ENCODE measurements at regions of chr2 and their contacts with region 1.

Region 1: GRCh38 chr2:96145036-96145847 is at the start of gene DUSP2:
- DNase-seq: peak; percentile 80 to 97 (median 91)
- ATAC-seq: peak; percentile 37
- H3K4me3 ChIP-seq: peak within 1 kb of the TSS; percentile 91 to 96
- H3K4me3 Mint-ChIP-seq: peak within 1 kb of the TSS; percentile 94
- H3K27ac ChIP-seq: peak within 1 kb of the TSS; percentile 98 to 99
- H3K27ac Mint-ChIP-seq: peak within 1 kb of the TSS; percentile 94
- H3K4me1 ChIP-seq: peaks cover 61% of the 10 kb centered on the region
- H3K4me1 Mint-ChIP-seq: peaks cover 57% of the 10 kb centered on the region
- H3K27me3 ChIP-seq: no peaks in the 10 kb centered on the region
- H3K27me3 Mint-ChIP-seq: no peaks in the 10 kb centered on the region
- CTCF ChIP-seq: no peak
- total RNA-seq, gene DUSP2: 1,304 to 1,350 TPM

Region 2: DNA sequence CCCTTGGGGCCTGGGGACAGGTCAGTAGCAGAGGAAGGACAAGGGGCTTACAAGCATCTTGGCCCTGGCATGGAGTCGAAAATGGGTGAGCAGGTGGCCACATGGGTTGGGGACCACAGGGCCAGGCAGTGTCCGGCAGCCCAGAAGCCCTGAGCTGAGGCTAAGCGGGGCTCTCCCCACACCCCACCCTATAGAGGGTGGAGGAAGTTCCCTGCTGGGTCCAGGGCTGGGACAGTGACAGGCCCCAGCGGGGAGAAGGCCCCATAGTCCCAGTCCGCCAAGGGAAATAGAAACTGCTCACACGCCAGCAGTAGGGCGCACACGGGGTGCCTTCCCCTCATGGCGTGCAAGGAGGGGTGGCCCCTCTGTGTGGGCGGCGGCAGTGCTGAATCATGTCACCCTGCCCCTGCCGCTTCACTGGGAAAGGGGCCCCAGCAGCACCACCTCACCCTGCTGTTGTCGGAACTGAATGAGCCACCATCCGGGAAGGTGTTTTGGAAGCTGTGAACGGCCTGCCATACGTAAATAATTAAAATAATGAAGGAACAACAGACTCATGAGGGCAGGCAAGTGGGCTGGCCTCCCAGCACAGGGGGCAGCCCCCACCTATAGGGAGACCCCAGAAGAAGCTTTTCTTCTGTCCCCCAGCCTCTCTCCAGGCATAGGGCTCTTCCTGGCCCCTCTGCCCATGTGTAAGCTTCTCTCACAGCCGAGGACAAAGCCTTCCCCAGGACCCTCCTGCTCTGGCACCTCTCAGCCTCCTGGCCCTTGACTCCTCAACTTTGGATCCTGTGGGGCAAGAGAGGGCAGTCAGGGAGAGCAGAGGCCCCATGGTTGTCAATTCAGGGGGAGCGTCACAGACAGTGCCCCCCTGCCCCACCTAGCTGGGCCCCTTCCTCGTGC is 12.7 kb after region 1 on chr2:
- CTCF ChIA-PET with region 1: interaction called, 18 read pairs
- POLR2A ChIA-PET with region 1: interaction called, 83 read pairs
- intact Hi-C with region 1: loop called (anchors 1 kb)
- DNase-seq: peak in 8 of 9 experiments; percentile 65 to 92 (median 84)
- ATAC-seq: peak; percentile 81
- H3K4me3 ChIP-seq: peak overlapping the region; percentile 12 to 32
- H3K4me3 Mint-ChIP-seq: peak overlapping the region; percentile 73
- H3K27ac ChIP-seq: peak overlapping the region; percentile 40 to 88
- H3K27ac Mint-ChIP-seq: peak overlapping the region; percentile 92
- H3K4me1 ChIP-seq: peaks cover 69% of the 10 kb centered on the region
- H3K4me1 Mint-ChIP-seq: peaks cover 83% of the 10 kb centered on the region
- H3K27me3 ChIP-seq: no peaks in the 10 kb centered on the region
- H3K27me3 Mint-ChIP-seq: no peaks in the 10 kb centered on the region
- CTCF ChIP-seq: no peak

Region 3: DNA sequence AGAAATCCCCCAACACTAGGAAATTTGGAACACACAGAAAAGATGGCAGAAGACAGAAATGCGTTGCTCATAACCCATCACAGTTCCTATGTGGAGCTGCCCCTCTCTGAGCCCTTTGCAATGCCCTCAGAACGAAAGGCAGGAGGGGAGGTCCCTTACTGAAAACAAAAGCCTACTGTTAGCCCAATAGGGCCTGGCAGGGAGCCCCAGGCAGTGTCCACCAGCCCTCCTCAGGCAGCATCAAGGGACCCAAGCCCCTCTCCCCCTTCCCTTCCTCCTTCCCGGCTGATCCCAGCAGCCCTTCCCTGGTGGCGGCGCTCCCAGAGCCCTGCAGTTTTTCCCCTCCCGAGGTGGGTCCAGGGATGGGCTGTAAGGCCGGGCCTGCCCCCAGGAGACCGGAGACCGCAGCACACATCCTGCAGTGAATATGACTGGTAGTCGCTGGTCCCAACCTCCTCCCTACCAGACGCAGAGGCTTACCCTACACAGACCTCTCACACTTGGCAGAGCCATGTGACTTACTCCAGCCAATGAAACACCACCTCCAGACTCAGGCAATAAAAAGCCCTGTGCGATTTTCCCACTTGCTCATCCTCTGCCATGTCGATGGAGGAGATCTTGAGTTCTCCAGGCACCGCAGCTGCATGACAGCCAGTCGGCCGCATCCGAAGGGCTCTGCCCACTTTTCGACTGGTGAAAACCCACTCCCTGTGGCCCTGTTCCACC is 19.4 kb after region 1 on chr2:
- CTCF ChIA-PET with region 1: interaction called, 775 read pairs
- POLR2A ChIA-PET with region 1: interaction called, 83 read pairs
- intact Hi-C with region 1: loop called (anchors 1 kb)
- DNase-seq: peak in 6 of 9 experiments; percentile 52 to 91 (median 80)
- ATAC-seq: peak; percentile 72
- H3K4me3 ChIP-seq: peak overlapping the region; percentile 25 to 37
- H3K4me3 Mint-ChIP-seq: peak overlapping the region; percentile 78
- H3K27ac ChIP-seq: peak overlapping the region; percentile 63 to 95
- H3K27ac Mint-ChIP-seq: peak overlapping the region; percentile 98
- H3K4me1 ChIP-seq: peaks cover 47% of the 10 kb centered on the region
- H3K4me1 Mint-ChIP-seq: peaks cover 60% of the 10 kb centered on the region
- H3K27me3 ChIP-seq: no peaks in the 10 kb centered on the region
- H3K27me3 Mint-ChIP-seq: no peaks in the 10 kb centered on the region
- CTCF ChIP-seq: no peak

Region 4: GRCh38 chr2:96188821-96189526 is 43.7 kb after region 1 on chr2:
- CTCF ChIA-PET with region 1: no interaction called
- POLR2A ChIA-PET with region 1: no interaction called
- intact Hi-C with region 1: no loop called
- DNase-seq: no peak
- ATAC-seq: no peak
- H3K4me3 ChIP-seq: no peak overlapping the region
- H3K4me3 Mint-ChIP-seq: no peak overlapping the region
- H3K27ac ChIP-seq: no peak overlapping the region
- H3K27ac Mint-ChIP-seq: peak overlapping the region; percentile 69
- H3K4me1 ChIP-seq: no peaks in the 10 kb centered on the region
- H3K4me1 Mint-ChIP-seq: peaks cover 7% of the 10 kb centered on the region
- H3K27me3 ChIP-seq: no peaks in the 10 kb centered on the region
- H3K27me3 Mint-ChIP-seq: no peaks in the 10 kb centered on the region
- CTCF ChIP-seq: no peak

Region 5: GRCh38 chr2:96336104-96336775 is 191.0 kb after region 1 on chr2:
- CTCF ChIA-PET with region 1: no interaction called
- POLR2A ChIA-PET with region 1: interaction called, 3 read pairs
- intact Hi-C with region 1: loop called in 1 of 2 experiments (anchors 5 kb)
- DNase-seq: no peak
- ATAC-seq: no peak
- H3K4me3 ChIP-seq: peak overlapping the region; percentile 42 to 83
- H3K4me3 Mint-ChIP-seq: peak overlapping the region; percentile 85
- H3K27ac ChIP-seq: no peak overlapping the region
- H3K27ac Mint-ChIP-seq: peak overlapping the region; percentile 63
- H3K4me1 ChIP-seq: peaks cover 14% of the 10 kb centered on the region
- H3K4me1 Mint-ChIP-seq: peaks cover 29% of the 10 kb centered on the region
- H3K27me3 ChIP-seq: no peaks in the 10 kb centered on the region
- H3K27me3 Mint-ChIP-seq: no peaks in the 10 kb centered on the region
- CTCF ChIP-seq: no peak

Measured in CD8-positive, alpha-beta T cell (primary cell).